Caco-2 (cell line): ENCODE measurements at regions of chr4 and their contacts with region 1.

Region 1: GRCh38 chr4:81197864-81198524 is 17.0 kb downstream of the PRKG2 start:
- DNase-seq: no peak
- H3K4me3 ChIP-seq: no peak overlapping the region
- H3K4me3 Mint-ChIP-seq: no peak overlapping the region
- H3K27ac Mint-ChIP-seq: no peak overlapping the region
- H3K4me1 ChIP-seq: no peaks in the 10 kb centered on the region
- H3K4me1 Mint-ChIP-seq: peaks cover 2% of the 10 kb centered on the region
- H3K27me3 ChIP-seq: no peaks in the 10 kb centered on the region
- H3K27me3 Mint-ChIP-seq: no peaks in the 10 kb centered on the region
- CTCF ChIP-seq: no peak

Region 2: DNA sequence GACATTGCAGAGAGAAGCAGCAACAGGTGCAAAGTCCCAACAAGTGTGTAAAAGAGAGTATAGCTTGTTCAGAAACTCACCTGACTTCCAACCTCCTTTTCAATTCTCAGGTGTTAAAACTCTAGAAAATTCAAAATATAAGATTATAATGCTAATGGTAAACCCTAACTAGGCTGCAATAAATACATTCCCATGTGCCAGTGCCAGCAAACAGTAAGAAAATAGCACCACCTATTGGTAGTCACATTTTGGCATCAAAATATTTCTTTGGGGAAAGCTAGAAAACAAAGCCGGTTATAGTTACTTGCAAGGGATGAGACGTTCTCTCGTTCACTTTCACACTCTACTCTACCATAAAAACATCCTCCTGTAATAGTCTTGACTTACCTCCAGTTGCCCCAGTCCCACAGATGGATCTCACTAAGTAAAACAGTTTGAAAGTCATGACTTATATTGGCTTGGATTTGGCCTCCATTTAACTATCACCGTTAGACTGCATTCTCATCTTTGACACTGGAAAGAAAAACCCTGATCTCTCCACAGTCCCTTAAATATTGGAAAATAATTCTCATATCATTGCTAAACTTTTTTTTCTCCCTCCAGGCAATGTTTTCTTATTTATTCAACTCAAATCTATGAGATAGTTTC is 157.9 kb before region 1 on chr4:
- CTCF ChIA-PET with region 1: no interaction called
- POLR2A ChIA-PET with region 1: no interaction called
- intact Hi-C with region 1: no loop called
- DNase-seq: peak in 1 of 2 experiments; percentile 20
- H3K4me3 ChIP-seq: no peak overlapping the region
- H3K4me3 Mint-ChIP-seq: no peak overlapping the region
- H3K27ac Mint-ChIP-seq: no peak overlapping the region
- H3K4me1 ChIP-seq: no peaks in the 10 kb centered on the region
- H3K4me1 Mint-ChIP-seq: no peaks in the 10 kb centered on the region
- H3K27me3 ChIP-seq: no peaks in the 10 kb centered on the region
- H3K27me3 Mint-ChIP-seq: peaks cover 2% of the 10 kb centered on the region
- CTCF ChIP-seq: peak; percentile 39 to 55

Region 3: GRCh38 chr4:81084029-81084428 is 114.0 kb before region 1 on chr4:
- CTCF ChIA-PET with region 1: no interaction called
- POLR2A ChIA-PET with region 1: no interaction called
- intact Hi-C with region 1: loop called (anchors 10 kb)
- DNase-seq: peak in 1 of 2 experiments; percentile 19
- H3K4me3 ChIP-seq: no peak overlapping the region
- H3K4me3 Mint-ChIP-seq: no peak overlapping the region
- H3K27ac Mint-ChIP-seq: no peak overlapping the region
- H3K4me1 ChIP-seq: no peaks in the 10 kb centered on the region
- H3K4me1 Mint-ChIP-seq: no peaks in the 10 kb centered on the region
- H3K27me3 ChIP-seq: no peaks in the 10 kb centered on the region
- H3K27me3 Mint-ChIP-seq: no peaks in the 10 kb centered on the region
- CTCF ChIP-seq: peak; percentile 24 to 53

Region 4: DNA sequence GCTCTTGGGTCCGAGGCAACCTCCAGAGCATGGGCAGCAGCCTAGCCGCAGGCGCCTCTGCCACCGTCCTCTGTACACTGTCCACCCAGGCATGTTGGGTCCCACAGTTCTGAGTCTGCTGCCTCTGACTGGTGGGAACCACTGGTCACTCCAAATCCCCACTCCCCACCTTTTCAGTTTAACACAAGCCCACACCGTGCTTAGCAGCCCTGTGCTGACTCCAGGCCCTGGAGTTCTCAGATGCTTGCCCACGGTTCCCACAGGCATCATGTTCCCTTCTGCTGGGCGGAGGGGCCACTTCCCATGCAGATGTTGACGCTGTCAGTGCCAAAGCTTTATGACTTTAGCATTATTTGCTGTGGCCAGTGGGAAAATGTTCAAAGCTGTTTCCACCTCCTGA is 1496.1 kb after region 1 on chr4:
- CTCF ChIA-PET with region 1: no interaction called
- POLR2A ChIA-PET with region 1: no interaction called
- intact Hi-C with region 1: no loop called
- DNase-seq: no peak
- H3K4me3 ChIP-seq: no peak overlapping the region
- H3K4me3 Mint-ChIP-seq: no peak overlapping the region
- H3K27ac Mint-ChIP-seq: no peak overlapping the region
- H3K4me1 ChIP-seq: no peaks in the 10 kb centered on the region
- H3K4me1 Mint-ChIP-seq: peaks cover 12% of the 10 kb centered on the region
- H3K27me3 ChIP-seq: no peaks in the 10 kb centered on the region
- H3K27me3 Mint-ChIP-seq: no peaks in the 10 kb centered on the region
- CTCF ChIP-seq: no peak